PC-9 (cell line): ENCODE measurements at regions of chr17 and their contacts with region 1.

Region 1: GRCh38 chr17:59406808-59407429 is 75.5 kb downstream of the YPEL2 start:
- DNase-seq: peak; percentile 56 to 88
- H3K4me3 ChIP-seq: no peak overlapping the region
- H3K27ac ChIP-seq: no peak overlapping the region
- H3K4me1 ChIP-seq: peaks cover 19% of the 10 kb centered on the region
- H3K27me3 ChIP-seq: no peaks in the 10 kb centered on the region
- CTCF ChIP-seq: no peak

Region 2: GRCh38 chr17:59277031-59277430 is 129.9 kb before region 1 on chr17:
- CTCF ChIA-PET with region 1: no interaction called
- POLR2A ChIA-PET with region 1: no interaction called
- intact Hi-C with region 1: no loop called
- DNase-seq: no peak
- H3K4me3 ChIP-seq: no peak overlapping the region
- H3K27ac ChIP-seq: no peak overlapping the region
- H3K4me1 ChIP-seq: no peaks in the 10 kb centered on the region
- H3K27me3 ChIP-seq: no peaks in the 10 kb centered on the region
- CTCF ChIP-seq: no peak

Region 3: GRCh38 chr17:59372138-59372857 is 34.6 kb before region 1 on chr17:
- CTCF ChIA-PET with region 1: no interaction called
- POLR2A ChIA-PET with region 1: no interaction called
- intact Hi-C with region 1: loop called (anchors 2 kb)
- DNase-seq: peak; percentile 35 to 68
- H3K4me3 ChIP-seq: no peak overlapping the region
- H3K27ac ChIP-seq: peak overlapping the region; percentile 16
- H3K4me1 ChIP-seq: peaks cover 42% of the 10 kb centered on the region
- H3K27me3 ChIP-seq: no peaks in the 10 kb centered on the region
- CTCF ChIP-seq: no peak